CD8-positive, alpha-beta T cell (primary cell): ENCODE measurements at regions of chr10 and their contacts with region 1.

Region 1: GRCh38 chr10:114470956-114471905 is 66.9 kb upstream of the AFAP1L2 start:
- DNase-seq: peak; percentile 43 to 87 (median 67)
- ATAC-seq: peak; percentile 73
- H3K4me3 ChIP-seq: no peak overlapping the region
- H3K4me3 Mint-ChIP-seq: no peak overlapping the region
- H3K27ac ChIP-seq: no peak overlapping the region
- H3K27ac Mint-ChIP-seq: peak overlapping the region; percentile 89
- H3K4me1 ChIP-seq: peaks cover 11% of the 10 kb centered on the region
- H3K4me1 Mint-ChIP-seq: peaks cover 39% of the 10 kb centered on the region
- H3K27me3 ChIP-seq: no peaks in the 10 kb centered on the region
- H3K27me3 Mint-ChIP-seq: no peaks in the 10 kb centered on the region
- CTCF ChIP-seq: peak; percentile 83

Region 2: GRCh38 chr10:114486938-114487814 is 15.9 kb after region 1 on chr10:
- CTCF ChIA-PET with region 1: interaction called, 26 read pairs
- POLR2A ChIA-PET with region 1: no interaction called
- intact Hi-C with region 1: loop called in 1 of 2 experiments (anchors 1 kb)
- DNase-seq: no peak
- ATAC-seq: no peak
- H3K4me3 ChIP-seq: no peak overlapping the region
- H3K4me3 Mint-ChIP-seq: no peak overlapping the region
- H3K27ac ChIP-seq: no peak overlapping the region
- H3K27ac Mint-ChIP-seq: peak overlapping the region; percentile 74
- H3K4me1 ChIP-seq: peaks cover 19% of the 10 kb centered on the region
- H3K4me1 Mint-ChIP-seq: peaks cover 66% of the 10 kb centered on the region
- H3K27me3 ChIP-seq: no peaks in the 10 kb centered on the region
- H3K27me3 Mint-ChIP-seq: no peaks in the 10 kb centered on the region
- CTCF ChIP-seq: no peak

Region 3: GRCh38 chr10:114499630-114500190 is 28.5 kb after region 1 on chr10:
- CTCF ChIA-PET with region 1: interaction called, 17 read pairs
- POLR2A ChIA-PET with region 1: interaction called, 3 read pairs
- intact Hi-C with region 1: no loop called
- DNase-seq: peak in 7 of 9 experiments; percentile 19 to 80 (median 64)
- ATAC-seq: peak; percentile 50
- H3K4me3 ChIP-seq: peak overlapping the region in 1 of 2 experiments; percentile 21
- H3K4me3 Mint-ChIP-seq: peak overlapping the region; percentile 63
- H3K27ac ChIP-seq: peak overlapping the region; percentile 41 to 57
- H3K27ac Mint-ChIP-seq: peak overlapping the region; percentile 94
- H3K4me1 ChIP-seq: peaks cover 92% of the 10 kb centered on the region
- H3K4me1 Mint-ChIP-seq: peaks cover 91% of the 10 kb centered on the region
- H3K27me3 ChIP-seq: no peaks in the 10 kb centered on the region
- H3K27me3 Mint-ChIP-seq: no peaks in the 10 kb centered on the region
- CTCF ChIP-seq: no peak

Region 4: GRCh38 chr10:114520453-114520852 is 49.2 kb after region 1 on chr10:
- CTCF ChIA-PET with region 1: interaction called, 76 read pairs
- POLR2A ChIA-PET with region 1: interaction called, 7 read pairs
- intact Hi-C with region 1: no loop called
- DNase-seq: peak in 2 of 9 experiments; percentile 43 to 56
- ATAC-seq: peak; percentile 4
- H3K4me3 ChIP-seq: no peak overlapping the region
- H3K4me3 Mint-ChIP-seq: peak overlapping the region; percentile 73
- H3K27ac ChIP-seq: peak overlapping the region; percentile 15 to 93
- H3K27ac Mint-ChIP-seq: peak overlapping the region; percentile 97
- H3K4me1 ChIP-seq: peaks cover 91% of the 10 kb centered on the region
- H3K4me1 Mint-ChIP-seq: peaks cover 94% of the 10 kb centered on the region
- H3K27me3 ChIP-seq: no peaks in the 10 kb centered on the region
- H3K27me3 Mint-ChIP-seq: no peaks in the 10 kb centered on the region
- CTCF ChIP-seq: no peak

Region 5: DNA sequence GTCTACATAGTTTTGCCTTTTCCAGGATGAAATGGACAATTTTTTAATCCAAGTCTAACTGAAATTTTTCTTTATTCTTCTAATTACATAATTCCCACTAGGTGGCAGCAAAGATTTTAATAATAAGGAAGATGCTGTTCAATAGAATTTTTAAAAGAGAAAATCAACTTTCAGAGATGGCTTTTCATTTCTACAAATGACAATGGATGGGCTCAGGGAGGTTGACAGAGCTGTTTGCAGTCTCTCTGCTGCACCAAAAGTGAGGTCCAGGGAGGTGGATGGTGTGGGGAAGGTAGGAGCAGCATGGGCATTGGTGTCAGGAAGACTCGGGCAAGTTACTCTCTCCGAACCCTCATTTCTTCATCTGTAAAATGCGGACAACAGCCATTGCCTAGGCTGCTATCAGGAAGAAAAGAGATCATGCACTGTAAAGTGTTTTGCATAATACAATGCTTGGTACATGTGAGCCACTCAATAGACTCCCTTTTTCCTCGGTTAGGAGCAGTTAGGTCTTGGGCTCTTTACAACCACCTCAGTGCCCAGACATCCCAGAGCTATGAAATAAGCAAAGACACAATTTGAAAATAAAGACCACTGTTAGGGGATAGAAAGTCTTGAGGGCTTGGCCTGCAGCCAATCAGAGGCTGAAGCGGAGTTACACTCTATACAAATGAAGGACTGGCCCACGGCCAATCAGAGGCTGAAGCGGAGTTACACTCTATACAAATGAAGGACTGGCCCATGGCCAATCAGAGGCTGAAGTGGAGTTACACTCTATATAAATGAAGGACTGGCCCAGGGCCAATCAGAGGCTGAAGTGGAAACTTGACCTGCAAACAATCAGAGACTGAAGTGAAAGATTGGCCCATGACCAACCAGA is 79.8 kb after region 1 on chr10:
- CTCF ChIA-PET with region 1: interaction called, 187 read pairs
- POLR2A ChIA-PET with region 1: interaction called, 7 read pairs
- intact Hi-C with region 1: loop called (anchors 1 to 2 kb)
- DNase-seq: peak in 1 of 9 experiments; percentile 53
- ATAC-seq: no peak
- H3K4me3 ChIP-seq: no peak overlapping the region
- H3K4me3 Mint-ChIP-seq: no peak overlapping the region
- H3K27ac ChIP-seq: no peak overlapping the region
- H3K27ac Mint-ChIP-seq: no peak overlapping the region
- H3K4me1 ChIP-seq: peaks cover 30% of the 10 kb centered on the region
- H3K4me1 Mint-ChIP-seq: peaks cover 34% of the 10 kb centered on the region
- H3K27me3 ChIP-seq: no peaks in the 10 kb centered on the region
- H3K27me3 Mint-ChIP-seq: no peaks in the 10 kb centered on the region
- CTCF ChIP-seq: peak; percentile 80

Region 6: GRCh38 chr10:114703377-114704107 is 232.3 kb after region 1 on chr10:
- CTCF ChIA-PET with region 1: interaction called, 22 read pairs
- POLR2A ChIA-PET with region 1: no interaction called
- intact Hi-C with region 1: loop called (anchors 1 kb)
- DNase-seq: peak in 4 of 9 experiments; percentile 16 to 59 (median 42)
- ATAC-seq: peak; percentile 77
- H3K4me3 ChIP-seq: no peak overlapping the region
- H3K4me3 Mint-ChIP-seq: no peak overlapping the region
- H3K27ac ChIP-seq: no peak overlapping the region
- H3K27ac Mint-ChIP-seq: no peak overlapping the region
- H3K4me1 ChIP-seq: no peaks in the 10 kb centered on the region
- H3K4me1 Mint-ChIP-seq: no peaks in the 10 kb centered on the region
- H3K27me3 ChIP-seq: no peaks in the 10 kb centered on the region
- H3K27me3 Mint-ChIP-seq: peaks cover 4% of the 10 kb centered on the region
- CTCF ChIP-seq: peak; percentile 64

Region 7: GRCh38 chr10:115129752-115130151 is 658.5 kb after region 1 on chr10:
- CTCF ChIA-PET with region 1: no interaction called
- POLR2A ChIA-PET with region 1: no interaction called
- intact Hi-C with region 1: loop called in 1 of 2 experiments (anchors 10 kb)
- DNase-seq: peak in 2 of 9 experiments; percentile 24 to 40
- ATAC-seq: no peak
- H3K4me3 ChIP-seq: no peak overlapping the region
- H3K4me3 Mint-ChIP-seq: no peak overlapping the region
- H3K27ac ChIP-seq: no peak overlapping the region
- H3K27ac Mint-ChIP-seq: no peak overlapping the region
- H3K4me1 ChIP-seq: no peaks in the 10 kb centered on the region
- H3K4me1 Mint-ChIP-seq: no peaks in the 10 kb centered on the region
- H3K27me3 ChIP-seq: no peaks in the 10 kb centered on the region
- H3K27me3 Mint-ChIP-seq: peaks cover 5% of the 10 kb centered on the region
- CTCF ChIP-seq: peak; percentile 25